Esophagus muscularis mucosa (tissue), 4 donors: ENCODE measurements at regions of chr5 and their contacts with region 1.

Region 1: GRCh38 chr5:170747851-170748250 is 35.7 kb upstream of the GABRP start:
- DNase-seq: peak; percentile 88
- H3K4me3 ChIP-seq: no peak overlapping the region
- H3K27ac ChIP-seq: no peak overlapping the region
- H3K4me1 ChIP-seq: peaks cover 31 to 58% (median 40%) of the 10 kb centered on the region in 4 donors
- H3K27me3 ChIP-seq: peaks cover 0 to 49% (median 0%) of the 10 kb centered on the region in 4 donors
- CTCF ChIP-seq: peak in 1 of 3 experiments; percentile 11
- EP300 ChIP-seq: no peak
- POLR2A ChIP-seq: no peak

Region 2: DNA sequence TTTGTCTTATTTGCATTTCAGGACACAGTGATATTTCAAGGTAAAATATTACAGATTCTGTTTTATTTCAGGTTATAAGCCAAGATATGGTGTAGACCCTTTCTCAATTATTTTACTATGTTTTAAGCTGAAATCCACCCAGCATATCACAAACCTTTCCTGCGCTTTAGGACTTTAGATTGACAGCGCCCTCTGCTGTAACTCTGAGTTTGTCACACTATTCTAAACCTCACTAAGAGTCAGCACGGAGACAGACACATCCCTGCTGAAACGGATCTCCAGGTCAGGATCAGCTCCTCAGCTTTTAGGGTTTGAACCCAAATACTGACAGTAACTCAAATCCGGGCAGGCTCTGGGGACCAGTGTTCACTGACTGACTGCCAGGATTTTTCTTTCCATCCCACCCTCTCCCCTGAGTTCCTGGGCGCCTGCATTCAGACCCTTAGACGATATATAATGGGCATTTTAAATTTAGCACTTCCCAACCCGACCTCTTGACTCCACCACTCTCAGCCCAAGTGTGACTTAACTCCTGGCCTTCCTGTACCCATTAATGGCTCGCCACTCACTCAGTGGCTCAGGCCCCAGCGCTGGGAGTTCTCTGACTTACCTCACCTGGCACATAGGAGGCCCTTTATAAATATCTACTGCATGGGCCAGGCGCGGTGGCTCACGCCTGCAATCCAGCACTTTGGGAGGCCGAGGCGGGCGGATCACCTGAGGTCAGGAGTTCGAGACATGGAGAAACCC is 594.7 kb after region 1 on chr5:
- intact Hi-C with region 1: loop called (anchors 10 kb)
- DNase-seq: no peak
- H3K4me3 ChIP-seq: no peak overlapping the region
- H3K27ac ChIP-seq: no peak overlapping the region
- H3K4me1 ChIP-seq: no peaks in the 10 kb centered on the region
- H3K27me3 ChIP-seq: peaks cover 0 to 43% (median 3%) of the 10 kb centered on the region in 4 donors
- CTCF ChIP-seq: peak; percentile 27 to 52 (median 41)
- EP300 ChIP-seq: no peak
- POLR2A ChIP-seq: no peak